ENCODE measurements at regions of chr9 and their contacts with region 1.

Region 1: DNA sequence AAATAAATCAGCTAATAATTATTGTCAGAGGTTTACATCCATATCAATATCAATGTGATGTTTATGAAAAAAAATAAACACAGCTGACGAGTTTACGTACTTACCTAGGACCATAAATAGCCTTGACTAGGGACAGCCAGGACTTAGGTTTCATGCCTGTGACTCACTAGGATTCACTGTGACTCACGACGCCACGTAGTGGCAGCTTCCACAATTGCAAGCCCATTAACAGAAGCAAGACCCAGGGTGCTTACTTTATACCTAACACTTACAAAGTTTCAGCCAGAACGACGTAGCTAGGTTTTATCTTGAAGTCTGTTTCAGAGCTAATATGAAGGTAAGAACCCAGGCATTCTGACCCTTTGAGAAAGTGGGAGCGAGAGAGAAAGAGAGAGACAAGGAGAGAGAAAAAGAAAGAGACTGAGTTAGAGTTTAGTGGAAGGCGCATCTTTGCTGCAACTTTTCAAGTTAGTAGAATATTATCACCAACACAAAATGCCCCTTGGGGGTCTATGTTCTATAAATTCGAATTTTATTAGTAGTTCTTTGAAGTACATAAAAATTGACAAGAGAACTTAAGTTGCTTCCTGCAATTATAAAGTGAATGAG is 191.2 kb downstream of the GNA14 start:
- DNase-seq: peak; percentile 89

Region 2: GRCh38 chr9:77402286-77402685 is 54.6 kb before region 1 on chr9:
- intact Hi-C with region 1: no loop called
- DNase-seq: no peak

Region 3: DNA sequence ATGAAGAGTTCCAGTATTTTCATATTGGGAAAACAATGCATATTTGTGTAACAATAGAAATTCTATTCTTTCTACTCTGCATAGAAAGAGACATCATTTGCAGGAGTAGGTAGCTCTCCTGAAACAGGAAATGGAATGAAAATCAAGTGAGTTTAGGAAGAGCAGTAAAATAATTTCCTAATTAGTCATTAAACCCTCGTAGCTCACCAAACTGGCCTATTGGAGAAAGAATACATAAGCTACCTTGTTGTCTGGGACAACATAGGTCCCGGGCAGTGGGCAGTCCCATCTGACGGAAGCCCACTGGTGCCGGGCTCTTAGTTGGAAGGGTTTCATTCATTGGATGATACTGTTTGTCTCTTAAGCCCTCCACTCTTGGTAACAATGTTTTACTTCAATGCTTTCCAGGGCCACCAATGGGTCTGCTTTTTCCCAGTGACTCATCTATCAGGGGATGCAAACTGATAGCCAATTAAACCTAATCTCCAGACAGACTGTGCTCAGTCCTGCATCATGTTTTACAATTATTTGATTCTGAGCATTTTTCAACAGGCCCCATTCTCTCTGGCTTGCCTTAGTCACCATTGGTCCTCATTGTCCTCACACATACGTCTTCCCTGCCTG is 144.7 kb after region 1 on chr9:
- intact Hi-C with region 1: loop called (anchors 5 kb)
- DNase-seq: no peak

Region 4: GRCh38 chr9:77632652-77633051 is 175.7 kb after region 1 on chr9:
- intact Hi-C with region 1: no loop called
- DNase-seq: no peak

Region 5: GRCh38 chr9:77648234-77649120 is 191.5 kb after region 1 on chr9 and contains the start of gene GNA14:
- intact Hi-C with region 1: loop called (anchors 2 kb)
- DNase-seq: peak; percentile 79
- total RNA-seq, gene GNA14: 2.7 TPM

Region 6: DNA sequence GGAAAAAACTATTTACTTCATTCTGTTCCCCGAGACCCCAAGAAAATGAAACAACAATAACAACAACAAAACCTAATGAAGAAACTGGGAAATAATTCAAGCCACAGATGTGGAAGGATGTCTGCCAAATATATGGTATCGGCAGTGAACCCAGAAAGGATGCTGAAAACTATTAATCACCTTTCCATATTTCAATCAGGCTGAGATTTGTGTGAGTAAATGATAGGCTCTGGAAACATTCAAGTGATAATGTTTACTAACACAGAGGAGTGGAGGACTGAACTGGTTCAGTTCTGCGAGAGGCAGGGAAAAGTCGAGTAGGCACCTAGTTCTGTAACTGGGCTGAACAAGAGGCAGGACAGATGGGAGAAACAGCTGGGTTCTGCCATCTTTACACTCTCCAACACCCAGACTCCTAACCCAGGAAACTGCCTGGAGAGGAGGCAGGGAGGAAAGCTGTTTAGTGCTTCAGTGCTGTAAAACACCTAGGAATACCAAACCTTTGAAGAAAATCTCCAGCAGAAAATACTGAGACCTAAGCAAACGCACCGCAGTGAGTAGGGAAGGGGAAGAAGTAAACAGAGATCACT is 288.0 kb after region 1 on chr9:
- intact Hi-C with region 1: loop called (anchors 5 kb)
- DNase-seq: no peak

Measured in cardiac septum (tissue), 1 donor.